GM10248 (cell line): ENCODE measurements at regions of chr13 and their contacts with region 1.

Region 1: DNA sequence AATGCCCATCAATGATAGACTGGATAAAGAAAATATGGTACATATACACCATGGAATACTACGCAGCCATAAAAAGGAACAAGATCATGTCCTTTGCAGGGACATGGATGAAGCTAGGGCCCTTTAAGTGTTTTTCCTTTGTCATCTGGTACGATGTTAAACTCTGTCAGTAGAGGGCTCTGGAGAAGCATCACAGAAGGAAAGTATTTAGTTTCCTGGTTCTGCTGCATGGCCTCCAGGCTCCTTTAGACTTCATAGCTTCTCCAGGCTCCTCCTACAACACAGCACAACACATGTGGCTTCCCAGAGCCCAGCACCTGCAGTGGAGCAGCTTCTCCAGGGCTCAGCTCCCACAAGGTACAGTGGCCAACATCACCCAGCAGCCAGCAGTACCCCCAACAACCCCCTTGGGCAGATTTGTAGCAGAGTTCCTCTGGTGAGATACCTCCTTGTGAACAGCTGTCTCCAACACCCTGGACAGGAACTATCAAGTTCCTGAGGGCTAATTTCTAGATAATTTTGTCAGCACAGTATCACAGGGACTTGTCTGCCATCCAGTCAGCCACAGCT is 63.4 kb downstream of the KCTD12 start:
- DNase-seq: peak; percentile 34
- CTCF ChIP-seq: peak; percentile 35

Region 2: DNA sequence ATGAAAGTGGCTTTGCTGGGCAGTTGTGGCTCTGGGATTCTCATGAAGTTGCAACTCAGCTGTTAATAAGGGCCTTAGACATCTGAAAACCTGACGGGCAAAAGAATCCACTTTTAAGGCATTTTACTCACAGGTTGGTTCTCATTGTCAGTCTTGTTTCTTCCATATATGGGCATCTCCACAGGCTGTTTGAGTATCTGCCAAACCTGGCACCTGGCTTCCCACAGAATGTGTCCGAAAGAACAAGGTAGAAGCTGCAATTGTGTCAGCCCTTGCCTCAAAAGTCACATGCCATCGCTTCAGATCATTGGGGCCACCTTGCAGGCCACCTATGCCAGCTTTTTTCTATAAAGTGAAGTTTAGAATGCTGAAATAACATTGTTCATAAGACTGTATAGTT is 39.0 kb before region 1 on chr13:
- CTCF ChIA-PET with region 1: no interaction called
- POLR2A ChIA-PET with region 1: no interaction called
- DNase-seq: no peak
- CTCF ChIP-seq: no peak

Region 3: GRCh38 chr13:76812206-76812897 is 10.4 kb before region 1 on chr13:
- CTCF ChIA-PET with region 1: interaction called, 10 read pairs
- POLR2A ChIA-PET with region 1: no interaction called
- DNase-seq: no peak
- CTCF ChIP-seq: no peak